ENCODE measurements at regions of chr12 and their contacts with region 1.

Region 1: DNA sequence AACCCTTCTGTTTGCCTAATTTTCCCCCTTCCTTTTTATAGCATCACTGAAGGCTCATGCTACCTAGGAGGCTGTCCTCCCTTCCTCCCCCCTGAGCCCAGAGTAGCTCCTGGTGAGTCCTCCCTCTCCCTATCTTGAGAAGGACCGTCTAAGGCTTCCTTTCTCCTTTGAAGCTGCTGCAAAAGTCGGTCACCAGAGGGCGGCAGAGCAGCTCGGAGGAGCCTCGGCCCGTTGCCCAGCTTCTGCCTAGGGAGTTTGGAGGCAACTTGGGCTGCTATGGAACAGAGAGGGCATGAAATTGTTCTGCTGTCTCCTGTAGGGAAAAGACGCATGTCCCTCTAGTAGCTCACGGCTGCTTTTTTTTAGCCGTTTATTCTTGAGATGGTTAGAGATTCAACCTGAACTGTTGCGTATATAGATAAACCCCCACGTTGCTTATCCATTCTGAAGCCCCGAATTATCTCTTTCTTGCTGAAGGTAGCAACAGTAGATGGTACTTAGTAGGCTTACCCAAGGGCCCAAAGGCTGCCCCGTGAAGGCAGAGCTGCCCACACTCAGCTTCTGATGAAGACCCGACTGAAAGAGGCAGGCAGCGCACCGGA is 5.7 kb downstream of the WNT5B start:
- DNase-seq: peak; percentile 65
- H3K4me3 ChIP-seq: no peak overlapping the region
- H3K27ac ChIP-seq: no peak overlapping the region
- H3K4me1 ChIP-seq: peaks cover 5% of the 10 kb centered on the region
- H3K27me3 ChIP-seq: peaks cover 36 to 42% of the 10 kb centered on the region in 2 experiments
- CTCF ChIP-seq: peak; percentile 85 to 87
- POLR2A ChIP-seq: no peak

Region 2: GRCh38 chr12:1605129-1606020 is 29.3 kb before region 1 on chr12:
- CTCF ChIA-PET with region 1: interaction called, 14 read pairs
- POLR2A ChIA-PET with region 1: no interaction called
- dilution Hi-C with region 1: no loop called
- intact Hi-C with region 1: no loop called
- DNase-seq: peak; percentile 81
- H3K4me3 ChIP-seq: peak overlapping the region in 2 of 3 experiments; percentile 27 to 28
- H3K27ac ChIP-seq: peak overlapping the region; percentile 39
- H3K4me1 ChIP-seq: peaks cover 9% of the 10 kb centered on the region
- H3K27me3 ChIP-seq: no peaks in the 10 kb centered on the region
- CTCF ChIP-seq: peak; percentile 73 to 85
- POLR2A ChIP-seq: no peak

Region 3: GRCh38 chr12:1644534-1645438 is 10.1 kb after region 1 on chr12:
- CTCF ChIA-PET with region 1: interaction called, 42 read pairs
- POLR2A ChIA-PET with region 1: no interaction called
- dilution Hi-C with region 1: no loop called
- intact Hi-C with region 1: no loop called
- DNase-seq: peak; percentile 82
- H3K4me3 ChIP-seq: no peak overlapping the region
- H3K27ac ChIP-seq: no peak overlapping the region
- H3K4me1 ChIP-seq: no peaks in the 10 kb centered on the region
- H3K27me3 ChIP-seq: peaks cover 24 to 27% of the 10 kb centered on the region in 2 experiments
- CTCF ChIP-seq: no peak
- POLR2A ChIP-seq: no peak

Region 4: DNA sequence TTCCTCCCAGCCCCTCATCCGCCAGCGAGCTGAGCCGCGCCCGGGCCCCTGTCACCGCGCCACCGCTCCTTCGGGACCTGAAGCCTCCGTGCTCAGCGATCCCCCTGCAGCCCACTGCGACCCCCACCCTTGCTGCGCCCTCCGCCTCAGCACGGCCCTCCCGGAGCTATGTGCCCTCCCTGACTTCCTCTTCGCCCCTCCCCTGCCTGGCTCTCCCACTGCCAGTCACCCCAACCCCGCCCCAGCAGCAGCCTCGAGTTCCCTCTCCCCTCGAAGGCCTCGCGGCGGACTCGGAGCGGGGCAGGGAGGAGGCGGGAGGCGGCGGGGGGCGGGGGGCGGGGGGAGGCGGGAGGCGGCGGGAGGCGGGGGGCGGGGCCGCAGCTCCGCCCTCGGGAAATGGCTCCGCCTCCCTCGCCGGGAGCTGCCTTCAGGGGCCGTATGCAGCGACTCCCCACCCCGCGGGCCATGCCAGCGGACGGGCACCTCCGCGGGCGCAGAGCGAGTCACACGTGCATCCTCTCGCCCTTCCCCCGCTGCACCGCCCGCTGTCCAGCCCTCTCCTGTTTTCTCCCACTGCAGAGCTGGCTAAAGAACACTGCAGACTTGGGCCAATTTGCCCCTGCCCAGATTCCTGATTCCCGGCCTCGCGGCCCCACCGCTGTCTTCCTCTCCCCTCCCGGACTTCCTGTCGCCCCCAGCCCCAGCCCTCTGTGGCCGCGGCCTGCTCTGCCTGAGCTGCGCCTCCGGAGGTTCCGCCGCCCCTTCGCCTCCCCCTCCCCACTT is 27.1 kb after region 1 on chr12:
- CTCF ChIA-PET with region 1: interaction called, 14 read pairs
- POLR2A ChIA-PET with region 1: no interaction called
- dilution Hi-C with region 1: no loop called
- intact Hi-C with region 1: no loop called
- DNase-seq: peak; percentile 90
- H3K4me3 ChIP-seq: peak overlapping the region in 1 of 3 experiments; percentile 37
- H3K27ac ChIP-seq: no peak overlapping the region
- H3K4me1 ChIP-seq: peaks cover 13% of the 10 kb centered on the region
- H3K27me3 ChIP-seq: no peaks in the 10 kb centered on the region
- CTCF ChIP-seq: no peak
- POLR2A ChIP-seq: no peak

Region 5: GRCh38 chr12:1690578-1691122 is 56.0 kb after region 1 on chr12 and contains the start of gene ADIPOR2:
- CTCF ChIA-PET with region 1: interaction called, 10 read pairs
- POLR2A ChIA-PET with region 1: no interaction called
- dilution Hi-C with region 1: no loop called
- intact Hi-C with region 1: no loop called
- DNase-seq: peak; percentile 94
- H3K4me3 ChIP-seq: peak within 1 kb of the TSS; percentile 72 to 95 (median 90)
- H3K27ac ChIP-seq: peak within 1 kb of the TSS; percentile 93
- H3K4me1 ChIP-seq: peaks cover 14% of the 10 kb centered on the region
- H3K27me3 ChIP-seq: no peaks in the 10 kb centered on the region
- CTCF ChIP-seq: no peak
- POLR2A ChIP-seq: peak; percentile 91
- total RNA-seq, gene ADIPOR2: 57.3 and 59.4 TPM in 2 replicates

Measured in endothelial cell of umbilical vein (primary cell).